Posterior cingulate gyrus (tissue), 11 donors: ENCODE measurements at regions of chr2 and their contacts with region 1.

Region 1: DNA sequence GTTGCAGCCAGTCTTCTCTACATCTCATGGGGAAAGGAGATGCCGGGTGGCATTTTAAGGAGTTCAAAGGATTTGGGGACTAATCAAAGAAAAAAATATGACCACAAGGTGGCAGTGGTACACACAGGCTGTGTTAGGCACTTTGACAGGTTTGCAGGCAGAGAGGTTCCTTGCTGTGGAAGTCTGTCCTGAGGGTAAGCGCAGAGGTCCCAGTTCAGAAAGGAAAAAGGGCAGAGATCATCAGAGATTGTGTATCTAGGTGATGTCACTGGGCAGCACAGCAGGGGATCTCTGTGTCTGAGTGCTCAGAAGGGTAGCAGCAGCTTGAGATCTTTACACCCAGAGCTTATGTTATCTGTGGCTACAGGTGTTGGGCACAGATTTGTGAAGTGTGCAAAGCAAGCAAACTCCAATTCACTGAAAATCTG is 231.4 kb downstream of the LRRTM1 start:
- DNase-seq: peak in 4 of 10 donors; percentile 32 to 34 (median 32)

Region 2: DNA sequence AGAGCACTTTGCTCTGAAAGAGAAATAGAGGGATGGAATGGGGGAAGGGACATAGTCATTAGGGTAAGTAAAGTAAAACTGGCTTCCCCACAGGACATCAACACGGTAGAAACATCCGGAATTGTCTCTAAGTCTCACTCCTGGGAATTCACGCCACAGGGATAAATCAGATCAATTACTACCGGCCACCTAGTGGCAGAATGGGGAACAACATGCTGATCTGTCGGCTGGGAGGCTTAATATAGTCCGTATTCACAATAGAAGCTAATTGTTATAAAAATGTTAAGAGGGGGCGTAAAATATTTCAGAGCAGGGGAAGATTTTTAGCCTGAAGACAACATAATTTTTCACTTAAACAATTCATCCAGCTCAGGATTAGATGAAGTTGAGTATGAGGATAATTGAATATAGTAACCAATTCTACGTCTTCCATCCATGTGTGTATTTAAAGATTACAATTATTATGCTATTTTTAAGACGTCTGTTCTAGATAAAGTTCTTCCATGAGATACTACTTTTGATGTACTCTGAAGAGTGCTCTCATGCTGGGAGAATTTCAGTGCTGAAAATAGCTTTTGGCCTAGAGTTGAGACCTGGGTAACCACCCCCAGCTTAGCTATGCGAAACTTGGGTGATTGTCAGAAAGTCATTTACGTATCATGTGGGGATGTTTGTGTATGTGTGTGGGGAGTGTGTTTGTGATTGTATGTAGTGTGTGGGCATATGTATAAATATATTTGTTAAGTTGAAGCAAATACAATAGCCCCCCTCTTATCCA is 165.7 kb after region 1 on chr2:
- intact Hi-C with region 1: loop called (anchors 10 kb)
- DNase-seq: peak in 5 of 10 donors; percentile 8 to 63 (median 45)

Region 3: DNA sequence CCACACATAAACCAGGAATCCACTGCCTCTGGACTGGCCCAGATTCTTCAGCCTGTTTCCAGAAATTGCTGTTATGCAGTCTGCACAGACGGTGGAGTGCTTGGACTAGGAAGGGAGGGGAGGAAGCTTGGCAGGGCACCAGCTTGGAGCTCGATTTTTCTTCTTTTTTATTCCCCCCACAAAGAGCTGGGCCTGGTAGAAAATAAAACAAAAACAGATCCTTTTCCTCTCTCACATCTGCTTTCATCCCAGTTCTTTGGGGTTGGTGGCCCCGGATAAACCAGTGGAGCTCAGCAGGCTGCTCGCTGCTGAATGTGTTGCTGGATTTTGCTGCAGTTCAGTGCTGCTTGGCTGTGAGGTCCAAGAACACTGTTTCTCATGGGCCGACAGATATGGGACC is 215.4 kb after region 1 on chr2:
- intact Hi-C with region 1: loop called (anchors 5 kb)
- DNase-seq: peak; percentile 58 to 94 (median 73)